Kidney (tissue), 22 donors: ENCODE measurements at regions of chr11 and their contacts with region 1.

Region 1: GRCh38 chr11:76799066-76799804 is 16.1 kb downstream of the TSKU start:
- DNase-seq: peak; percentile 82 to 94 (median 88)
- H3K4me3 ChIP-seq: no peak overlapping the region
- H3K27ac ChIP-seq: peak overlapping the region in 1 of 2 donors; percentile 5
- H3K4me1 ChIP-seq: peaks cover 0 to 28% (median 11%) of the 10 kb centered on the region in 3 donors
- H3K27me3 ChIP-seq: no peaks in the 10 kb centered on the region
- CTCF ChIP-seq: peak; percentile 92

Region 2: DNA sequence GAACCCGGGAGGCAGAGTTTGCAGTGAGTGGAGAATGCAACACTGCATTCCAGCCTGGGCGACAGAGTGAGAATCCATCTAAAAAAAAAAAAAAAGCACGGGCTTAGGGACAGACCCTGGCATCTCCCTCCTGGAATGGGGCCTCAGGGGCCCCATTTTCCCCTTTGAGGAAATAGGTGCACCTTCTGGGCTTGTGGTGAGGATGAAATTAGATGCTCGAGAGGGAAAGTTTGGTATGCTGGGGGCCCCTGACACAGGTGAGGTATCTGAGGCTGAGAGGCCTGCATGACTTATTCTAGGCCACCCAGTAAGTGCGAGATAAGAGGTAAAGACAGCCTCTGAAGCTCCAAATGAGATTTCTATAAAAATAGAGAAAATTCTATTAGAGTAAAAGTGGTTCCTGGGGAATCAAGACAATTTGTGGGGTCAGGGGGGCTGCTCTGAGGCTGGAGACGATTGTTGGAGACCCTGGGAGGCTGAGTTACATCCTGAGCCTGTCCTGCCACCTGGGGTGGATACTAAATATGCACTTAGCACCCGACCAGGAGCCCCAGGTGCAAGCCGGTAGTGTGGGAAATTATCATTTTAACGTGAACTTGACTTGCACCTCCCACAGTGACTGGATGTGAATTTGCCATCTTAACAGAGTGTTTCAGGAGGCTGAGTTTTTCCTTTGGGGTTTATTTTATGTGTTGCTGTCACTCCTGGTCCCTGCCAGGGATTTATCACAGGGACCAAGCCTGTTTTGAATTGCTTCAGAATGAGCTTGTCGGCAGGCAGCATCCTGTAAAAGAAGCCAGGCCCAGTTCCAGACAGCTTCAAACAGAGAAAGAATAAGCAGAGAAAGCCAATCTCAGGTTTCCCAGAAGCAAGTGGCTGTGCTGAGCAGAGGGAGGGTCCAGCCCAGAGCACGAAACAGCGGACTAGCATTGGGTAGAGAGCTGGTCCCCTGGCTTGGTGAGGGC is 64.5 kb before region 1 on chr11:
- intact Hi-C with region 1: loop called (anchors 5 kb)
- DNase-seq: peak in 2 of 5 donors; percentile 48 to 51
- H3K4me3 ChIP-seq: no peak overlapping the region
- H3K27ac ChIP-seq: no peak overlapping the region
- H3K4me1 ChIP-seq: no peaks in the 10 kb centered on the region
- H3K27me3 ChIP-seq: no peaks in the 10 kb centered on the region
- CTCF ChIP-seq: no peak